ENCODE measurements at regions of chr19 and their contacts with region 1.

Region 1: DNA sequence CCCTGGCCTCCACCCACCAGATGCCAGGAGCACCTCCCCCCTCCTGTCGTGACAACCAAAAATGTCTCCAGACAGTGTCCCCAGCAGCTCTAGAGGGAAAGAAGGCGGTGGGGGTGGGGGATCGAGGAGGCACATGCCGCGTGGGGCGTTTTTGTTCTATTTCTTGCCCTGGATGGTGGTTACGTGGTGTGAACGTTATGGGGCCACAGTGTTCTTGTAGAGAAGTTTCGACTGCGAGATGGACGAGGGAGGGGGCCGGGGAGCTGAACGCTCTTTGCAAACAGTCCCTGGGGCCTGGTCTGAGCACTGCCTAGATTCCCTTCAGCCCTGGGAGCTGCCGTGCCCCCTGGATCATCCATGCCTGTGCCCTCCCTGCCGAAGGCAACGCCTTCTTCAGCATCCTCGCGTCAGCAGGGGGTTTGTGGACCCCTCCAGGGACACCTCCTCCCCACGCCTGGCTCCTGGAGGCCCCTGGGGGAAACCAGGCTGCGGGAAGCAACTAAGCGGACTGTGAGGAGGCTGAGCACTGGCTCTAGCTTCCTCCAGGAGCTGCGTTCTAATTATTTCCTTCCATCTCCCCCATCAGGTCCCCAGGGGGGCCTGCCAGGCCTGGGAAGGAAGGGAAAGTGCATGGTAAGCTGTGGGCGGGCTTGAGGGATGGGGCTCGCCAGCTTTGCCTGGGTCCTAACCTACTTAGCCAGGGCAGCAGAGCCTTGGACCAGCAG is 131.5 kb downstream of the IER2 start:
- DNase-seq: no peak
- H3K4me3 ChIP-seq: no peak overlapping the region
- H3K27ac ChIP-seq: peak overlapping the region; percentile 19
- H3K4me1 ChIP-seq: no peaks in the 10 kb centered on the region
- H3K27me3 ChIP-seq: peaks cover 66% of the 10 kb centered on the region
- CTCF ChIP-seq: no peak

Region 2: DNA sequence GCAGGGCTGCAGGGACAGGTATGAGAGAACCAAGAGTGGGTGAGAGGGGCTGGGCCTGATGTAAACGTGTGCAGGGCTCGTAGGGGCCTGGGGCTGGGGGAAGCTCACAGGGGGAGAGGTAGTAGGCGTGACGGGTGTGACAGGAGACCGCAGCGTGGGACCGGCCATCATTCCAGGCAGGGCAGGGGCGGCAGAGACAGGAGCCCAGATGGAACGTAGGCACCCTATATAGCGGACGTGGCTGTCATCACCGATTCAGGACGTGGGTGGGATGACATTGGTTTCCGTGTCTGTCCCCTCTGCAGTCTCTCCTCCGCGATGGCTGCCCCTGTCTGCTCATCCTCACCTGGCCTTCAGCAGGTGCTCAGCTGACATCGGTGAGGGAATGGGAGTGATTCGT is 83.1 kb before region 1 on chr19:
- intact Hi-C with region 1: no loop called
- DNase-seq: no peak
- H3K4me3 ChIP-seq: no peak overlapping the region
- H3K27ac ChIP-seq: no peak overlapping the region
- H3K4me1 ChIP-seq: peaks cover 4% of the 10 kb centered on the region
- H3K27me3 ChIP-seq: no peaks in the 10 kb centered on the region
- CTCF ChIP-seq: no peak

Region 3: DNA sequence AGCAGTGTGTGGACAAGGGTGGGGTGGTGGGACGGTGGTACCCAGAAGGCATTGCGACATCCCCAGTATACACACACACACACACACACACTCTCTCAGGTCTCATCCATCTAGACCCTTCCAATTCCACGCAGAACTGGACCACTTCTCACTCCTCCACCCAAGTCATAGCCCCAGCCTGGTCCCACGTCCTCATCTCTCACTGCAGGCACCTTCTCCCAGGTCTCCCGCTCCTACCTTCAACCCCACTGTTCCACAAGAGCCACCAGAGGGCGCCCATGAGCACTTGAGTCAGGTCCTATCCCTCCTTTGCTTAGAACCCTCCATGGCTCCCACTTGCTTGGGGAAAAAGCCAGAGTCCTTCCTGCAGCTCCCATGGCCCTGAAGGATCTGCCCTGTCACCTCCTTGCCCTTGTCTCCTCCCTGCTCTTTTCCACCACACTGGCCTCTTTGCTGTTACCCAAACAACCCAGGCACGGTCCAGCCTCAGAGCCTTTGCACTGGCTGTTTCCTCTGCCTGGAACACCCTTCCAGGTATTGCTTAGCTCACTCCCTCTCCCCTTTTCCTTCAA is 68.9 kb before region 1 on chr19:
- intact Hi-C with region 1: no loop called
- DNase-seq: peak; percentile 50
- H3K4me3 ChIP-seq: no peak overlapping the region
- H3K27ac ChIP-seq: no peak overlapping the region
- H3K4me1 ChIP-seq: no peaks in the 10 kb centered on the region
- H3K27me3 ChIP-seq: no peaks in the 10 kb centered on the region
- CTCF ChIP-seq: peak; percentile 60

Region 4: DNA sequence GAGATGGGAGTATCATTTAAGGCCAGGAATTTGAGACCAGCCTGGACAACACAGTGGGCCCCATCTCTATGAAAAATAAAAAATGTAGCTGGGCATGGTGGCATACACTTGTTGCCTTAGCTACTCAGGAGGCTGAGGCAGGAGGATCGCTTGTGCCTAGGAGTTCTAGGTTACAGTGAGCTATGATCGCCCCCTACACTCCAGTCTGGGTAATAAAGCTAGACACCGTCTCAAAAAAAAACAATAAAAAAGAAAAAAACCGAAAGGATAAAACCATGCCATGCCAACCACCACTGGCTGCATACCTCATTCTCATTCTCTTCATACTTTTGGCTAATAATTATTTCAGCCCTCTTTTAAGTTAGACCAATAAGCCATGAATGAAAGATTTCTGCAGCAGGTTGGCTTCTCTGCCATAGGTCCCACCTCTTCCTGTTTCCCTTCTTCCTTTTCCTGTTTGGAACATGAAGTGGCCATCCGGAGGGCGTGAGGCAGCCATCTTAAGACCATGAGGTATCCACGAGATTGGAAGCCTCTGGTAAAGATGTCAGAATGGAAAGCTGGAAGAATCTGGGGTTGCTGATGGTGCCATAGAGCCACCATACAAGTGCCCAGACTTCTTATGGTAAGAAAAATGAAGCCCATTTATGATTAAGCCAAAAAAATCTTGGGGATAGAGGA is 53.2 kb after region 1 on chr19:
- intact Hi-C with region 1: no loop called
- DNase-seq: no peak
- H3K4me3 ChIP-seq: no peak overlapping the region
- H3K27ac ChIP-seq: no peak overlapping the region
- H3K4me1 ChIP-seq: no peaks in the 10 kb centered on the region
- H3K27me3 ChIP-seq: peaks cover 27% of the 10 kb centered on the region
- CTCF ChIP-seq: no peak

Region 5: GRCh38 chr19:13430790-13431582 is 149.3 kb after region 1 on chr19:
- intact Hi-C with region 1: loop called (anchors 10 kb)
- DNase-seq: peak; percentile 20
- H3K4me3 ChIP-seq: no peak overlapping the region
- H3K27ac ChIP-seq: no peak overlapping the region
- H3K4me1 ChIP-seq: no peaks in the 10 kb centered on the region
- H3K27me3 ChIP-seq: peaks cover 7% of the 10 kb centered on the region
- CTCF ChIP-seq: peak; percentile 67

Region 6: DNA sequence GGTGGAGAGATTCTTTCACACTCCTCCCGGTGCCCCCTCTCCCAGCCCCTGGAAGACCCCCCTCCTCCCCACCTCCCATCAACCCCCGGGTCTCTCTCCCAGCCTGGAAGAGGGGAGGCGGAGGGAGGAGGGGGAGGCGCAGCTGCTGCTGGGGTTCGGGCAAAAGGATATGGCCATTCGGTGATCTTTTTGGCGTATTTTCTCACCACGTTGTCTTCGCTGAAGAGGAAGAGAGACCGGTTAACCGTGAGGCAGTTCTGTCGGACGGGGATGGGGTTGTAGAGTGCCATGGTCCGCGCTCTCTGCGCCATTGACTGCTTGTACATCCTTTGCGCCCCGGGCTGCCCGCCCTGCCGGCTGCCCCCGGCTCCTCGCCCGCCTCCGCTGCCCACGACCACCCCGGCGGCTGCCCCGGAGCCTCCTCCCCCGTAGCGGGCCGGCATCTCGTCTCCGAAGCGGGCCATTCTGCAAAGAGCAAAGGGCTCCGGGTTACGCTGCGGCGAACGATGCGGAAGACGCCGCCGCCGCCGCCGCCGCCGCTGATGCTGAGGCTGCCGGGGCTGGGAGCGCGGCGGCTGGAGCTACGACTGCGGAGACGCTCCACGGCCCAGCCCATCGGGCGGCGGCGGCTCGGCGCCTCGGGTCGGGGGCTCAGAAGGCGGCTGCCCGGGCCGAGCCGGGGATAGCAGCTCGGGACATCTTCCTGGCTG is 224.2 kb after region 1 on chr19:
- intact Hi-C with region 1: no loop called
- DNase-seq: no peak
- H3K4me3 ChIP-seq: peak overlapping the region; percentile 60
- H3K27ac ChIP-seq: no peak overlapping the region
- H3K4me1 ChIP-seq: peaks cover 10% of the 10 kb centered on the region
- H3K27me3 ChIP-seq: peaks cover 98% of the 10 kb centered on the region
- CTCF ChIP-seq: no peak

Region 7: DNA sequence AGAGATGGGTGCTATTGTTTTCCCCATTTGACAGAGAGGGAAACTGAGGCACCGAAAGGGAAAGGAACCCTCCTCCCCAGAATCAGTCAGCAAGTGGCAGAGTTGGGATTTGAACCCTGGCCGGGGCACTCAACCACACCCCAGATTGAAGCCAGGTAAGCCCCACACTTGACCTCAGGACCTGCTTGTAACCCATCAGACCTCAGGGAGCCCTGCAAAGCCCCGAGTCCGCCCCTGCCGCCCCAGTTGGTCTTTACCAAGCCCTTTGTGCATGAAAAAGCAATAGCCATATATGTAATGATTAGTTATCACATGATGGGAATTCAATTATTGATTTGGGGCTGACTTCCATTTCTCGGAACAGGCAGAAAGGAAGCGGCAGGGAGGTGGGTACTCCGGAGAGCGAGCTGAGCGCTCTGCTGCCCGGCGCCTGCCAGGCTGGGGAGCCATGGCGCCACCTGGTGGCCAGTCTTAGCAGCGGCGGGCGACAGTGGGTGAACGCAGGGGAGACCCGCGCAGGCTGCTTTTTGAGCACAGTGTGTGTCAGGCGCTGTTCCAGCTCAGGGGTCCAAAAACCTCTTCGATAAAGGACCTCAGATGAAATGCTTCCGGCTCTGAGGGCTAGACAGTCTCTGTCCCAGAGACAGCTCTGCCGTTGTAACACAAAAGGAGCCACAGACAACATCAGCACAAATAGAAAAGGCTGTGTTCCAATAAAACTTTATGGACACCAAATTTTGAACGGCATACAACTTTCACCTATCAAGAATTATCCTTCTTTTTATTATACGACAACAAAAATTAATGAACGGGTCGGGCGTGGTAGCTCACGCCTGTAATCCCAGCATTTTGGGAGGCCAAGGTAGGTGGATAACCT is 307.5 kb after region 1 on chr19:
- intact Hi-C with region 1: loop called (anchors 5 kb)
- DNase-seq: peak; percentile 70
- H3K4me3 ChIP-seq: no peak overlapping the region
- H3K27ac ChIP-seq: no peak overlapping the region
- H3K4me1 ChIP-seq: no peaks in the 10 kb centered on the region
- H3K27me3 ChIP-seq: peaks cover 78% of the 10 kb centered on the region
- CTCF ChIP-seq: peak; percentile 99